ENCODE measurements at regions of chr2 and their contacts with region 1.

Region 1: DNA sequence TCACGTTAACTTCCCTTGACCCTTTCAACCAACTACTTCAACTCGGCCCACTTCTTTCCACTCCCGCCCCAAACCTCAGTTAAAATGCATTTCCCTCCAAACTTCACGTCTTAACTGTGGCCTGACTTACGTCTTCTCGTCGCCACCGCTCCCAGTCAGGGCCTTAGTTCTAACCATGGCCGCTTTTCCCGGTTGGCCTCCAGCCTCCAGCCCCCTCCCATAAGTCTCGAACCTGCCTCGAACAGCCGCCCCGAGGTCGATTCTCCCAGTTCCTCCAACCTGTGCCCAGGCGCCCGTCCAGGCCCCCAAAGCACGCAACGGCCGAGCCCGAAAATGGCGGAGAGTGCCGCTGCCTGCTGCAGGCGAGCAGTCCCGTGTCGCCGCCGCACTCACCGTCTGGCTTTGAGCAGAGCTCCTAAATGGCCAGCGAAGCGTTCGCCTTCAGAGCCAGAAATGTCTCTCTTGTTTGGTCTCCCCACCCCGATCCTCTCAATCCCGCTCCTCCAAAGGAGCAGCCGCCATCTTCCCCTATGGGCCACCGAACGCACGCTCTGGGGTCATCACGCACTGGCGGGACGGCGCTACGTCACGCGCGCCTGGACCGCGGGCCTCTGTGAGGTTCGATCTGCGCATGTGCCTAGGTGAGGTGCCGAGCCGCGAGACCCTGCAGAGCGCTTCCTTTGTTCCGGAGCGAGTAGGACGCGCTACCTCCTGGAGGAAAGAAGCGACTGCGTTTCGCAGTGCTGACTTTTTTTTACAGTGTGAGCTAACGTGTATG is at the start of gene WDR33:
- DNase-seq: peak; percentile 98
- H3K4me3 Mint-ChIP-seq: peak within 1 kb of the TSS; percentile 86
- H3K27ac Mint-ChIP-seq: peak within 1 kb of the TSS; percentile 98
- H3K4me1 Mint-ChIP-seq: peaks cover 34% of the 10 kb centered on the region
- H3K27me3 Mint-ChIP-seq: peaks cover 1% of the 10 kb centered on the region
- total RNA-seq, gene WDR33: 76.7 and 79.5 TPM in 2 replicates

Region 2: GRCh38 chr2:127387655-127388422 is 423.0 kb before region 1 on chr2 and contains the start of gene MAP3K2:
- intact Hi-C with region 1: loop called (anchors 5 kb)
- DNase-seq: peak; percentile 98
- H3K4me3 Mint-ChIP-seq: peak within 1 kb of the TSS; percentile 88
- H3K27ac Mint-ChIP-seq: peak within 1 kb of the TSS; percentile 98
- H3K4me1 Mint-ChIP-seq: peaks cover 63% of the 10 kb centered on the region
- H3K27me3 Mint-ChIP-seq: no peaks in the 10 kb centered on the region
- total RNA-seq, gene MAP3K2: 53.7 and 57.5 TPM in 2 replicates

Region 3: DNA sequence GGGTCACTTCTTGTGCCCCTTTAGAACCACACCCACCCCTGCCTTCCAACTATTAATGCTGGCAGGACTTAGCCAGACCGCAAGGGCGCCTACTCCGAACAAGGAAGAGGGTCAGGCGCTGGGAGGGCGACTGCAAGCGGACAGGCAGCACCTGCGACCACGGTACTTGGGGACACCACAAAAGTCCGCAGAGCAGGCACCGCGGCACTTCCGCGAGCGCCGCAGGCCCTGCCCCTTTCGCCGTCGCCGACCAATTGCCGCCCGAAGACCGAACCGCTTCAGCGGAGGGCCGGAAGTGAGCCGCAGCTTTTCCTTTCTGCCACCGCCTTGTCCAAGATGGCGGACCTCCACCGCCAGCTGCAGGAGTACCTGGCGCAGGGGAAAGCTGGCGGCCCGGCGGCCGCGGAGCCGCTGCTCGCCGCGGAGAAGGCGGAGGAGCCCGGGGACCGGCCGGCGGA is 109.6 kb before region 1 on chr2 and contains the start of gene SFT2D3:
- intact Hi-C with region 1: loop called (anchors 1 kb)
- DNase-seq: peak; percentile 97
- H3K4me3 Mint-ChIP-seq: peak within 1 kb of the TSS; percentile 92
- H3K27ac Mint-ChIP-seq: peak within 1 kb of the TSS; percentile 94
- H3K4me1 Mint-ChIP-seq: peaks cover 27% of the 10 kb centered on the region
- H3K27me3 Mint-ChIP-seq: no peaks in the 10 kb centered on the region
- total RNA-seq, gene SFT2D3: 5.9 and 6.3 TPM in 2 replicates

Region 4: GRCh38 chr2:127770973-127771735 is 39.7 kb before region 1 on chr2:
- intact Hi-C with region 1: loop called (anchors 2 kb)
- DNase-seq: no peak
- H3K4me3 Mint-ChIP-seq: no peak overlapping the region
- H3K27ac Mint-ChIP-seq: peak overlapping the region; percentile 66
- H3K4me1 Mint-ChIP-seq: peaks cover 16% of the 10 kb centered on the region
- H3K27me3 Mint-ChIP-seq: no peaks in the 10 kb centered on the region

Region 5: DNA sequence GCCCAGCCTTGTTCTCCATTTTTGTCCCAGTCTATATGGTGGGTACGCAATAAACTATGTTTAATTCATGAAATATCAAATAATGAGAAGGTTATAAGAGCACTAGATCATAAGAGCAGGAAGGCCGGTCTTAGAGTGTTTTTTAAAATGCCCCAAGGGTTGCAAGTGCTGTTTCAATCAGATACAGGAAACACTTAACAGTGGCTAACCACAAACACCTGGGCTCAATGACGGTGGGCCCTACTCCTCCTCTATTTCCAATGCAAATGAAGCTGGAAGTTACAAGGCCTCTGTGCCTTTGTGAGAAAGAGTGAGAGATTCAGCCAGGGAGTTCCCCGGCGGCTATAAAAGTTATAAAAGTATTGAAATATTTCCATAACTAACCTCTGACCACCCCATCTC is 19.0 kb after region 1 on chr2:
- intact Hi-C with region 1: loop called (anchors 1 kb)
- DNase-seq: peak; percentile 90
- H3K4me3 Mint-ChIP-seq: peak overlapping the region; percentile 53
- H3K27ac Mint-ChIP-seq: peak overlapping the region; percentile 68
- H3K4me1 Mint-ChIP-seq: peaks cover 19% of the 10 kb centered on the region
- H3K27me3 Mint-ChIP-seq: peaks cover 2% of the 10 kb centered on the region

Region 6: DNA sequence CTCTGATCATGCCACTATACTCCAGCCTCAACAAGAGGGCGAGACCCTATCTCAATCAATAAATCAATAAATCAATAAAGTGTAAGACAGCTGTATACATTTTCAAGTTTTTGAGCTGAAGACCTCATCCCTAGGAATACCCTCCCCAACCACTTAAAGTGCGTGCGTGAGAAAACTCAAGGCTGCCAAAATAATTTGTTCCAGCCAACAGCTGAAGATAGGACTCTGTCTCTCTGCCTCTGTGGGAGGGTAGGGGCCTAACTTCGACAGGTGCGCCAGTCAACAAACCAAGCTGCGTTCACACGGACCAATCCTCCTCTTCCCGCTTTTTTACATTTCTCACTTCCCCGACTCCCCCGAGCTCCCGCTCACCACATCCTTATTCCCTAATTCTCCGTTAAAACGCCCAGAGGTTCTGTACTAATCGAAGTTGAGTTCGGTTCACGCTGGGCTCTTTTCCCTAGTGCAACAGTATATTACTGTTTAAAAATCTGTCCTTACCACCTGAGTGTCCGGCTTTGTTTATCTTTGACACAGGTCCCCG is 46.5 kb after region 1 on chr2:
- intact Hi-C with region 1: loop called (anchors 1 kb)
- DNase-seq: peak; percentile 74
- H3K4me3 Mint-ChIP-seq: peak overlapping the region; percentile 93
- H3K27ac Mint-ChIP-seq: peak overlapping the region; percentile 90
- H3K4me1 Mint-ChIP-seq: peaks cover 27% of the 10 kb centered on the region
- H3K27me3 Mint-ChIP-seq: no peaks in the 10 kb centered on the region

Region 7: GRCh38 chr2:128090945-128091725 is 280.3 kb after region 1 on chr2 and contains the start of gene UGGT1:
- intact Hi-C with region 1: loop called (anchors 2 kb)
- DNase-seq: peak; percentile 98
- H3K4me3 Mint-ChIP-seq: peak within 1 kb of the TSS; percentile 89
- H3K27ac Mint-ChIP-seq: peak within 1 kb of the TSS; percentile 93
- H3K4me1 Mint-ChIP-seq: peaks cover 23% of the 10 kb centered on the region
- H3K27me3 Mint-ChIP-seq: no peaks in the 10 kb centered on the region
- total RNA-seq, gene UGGT1: 69.9 and 72.1 TPM in 2 replicates

Measured in activated CD4-positive, alpha-beta T cell treated with anti-CD3 and anti-CD28 coated beads, Interleukin-2, amount 10 ng/mL, durations not matched to agents 24 days and 14 days (primary cell).